Head of caudate nucleus (tissue), 42 donors: ENCODE measurements at regions of chr3 and their contacts with region 1.

Region 1: GRCh38 chr3:113495035-113495434 is 19.9 kb downstream of the SPICE1 start:
- DNase-seq: peak in 20 of 42 donors; percentile 12 to 58 (median 28)

Region 2: GRCh38 chr3:113626503-113627371 is 131.7 kb after region 1 on chr3:
- intact Hi-C with region 1: loop called (anchors 10 kb)
- DNase-seq: peak; percentile 19 to 74 (median 52)

Region 3: DNA sequence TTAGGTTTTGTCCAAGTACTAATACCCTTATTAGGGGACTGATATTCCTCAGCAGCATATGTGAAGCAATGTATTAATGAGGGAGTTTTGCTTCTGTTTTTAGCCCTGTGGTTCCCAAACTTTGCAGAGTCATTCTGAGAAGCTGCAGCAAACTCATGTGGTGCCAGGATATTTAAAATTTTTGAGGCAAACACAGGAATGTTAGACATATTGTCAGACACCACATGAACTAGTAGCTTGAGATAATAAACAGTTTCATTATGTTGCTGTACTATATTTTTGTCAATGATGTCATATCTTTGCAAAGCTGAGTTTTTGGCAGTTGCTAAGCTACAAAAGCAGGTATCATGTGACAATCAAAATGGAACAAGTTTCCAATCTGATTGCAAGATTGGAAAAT is 288.4 kb after region 1 on chr3:
- intact Hi-C with region 1: no loop called
- DNase-seq: no peak